CD4-positive, alpha-beta T cell (primary cell): ENCODE measurements at regions of chr1 and their contacts with region 1.

Region 1: DNA sequence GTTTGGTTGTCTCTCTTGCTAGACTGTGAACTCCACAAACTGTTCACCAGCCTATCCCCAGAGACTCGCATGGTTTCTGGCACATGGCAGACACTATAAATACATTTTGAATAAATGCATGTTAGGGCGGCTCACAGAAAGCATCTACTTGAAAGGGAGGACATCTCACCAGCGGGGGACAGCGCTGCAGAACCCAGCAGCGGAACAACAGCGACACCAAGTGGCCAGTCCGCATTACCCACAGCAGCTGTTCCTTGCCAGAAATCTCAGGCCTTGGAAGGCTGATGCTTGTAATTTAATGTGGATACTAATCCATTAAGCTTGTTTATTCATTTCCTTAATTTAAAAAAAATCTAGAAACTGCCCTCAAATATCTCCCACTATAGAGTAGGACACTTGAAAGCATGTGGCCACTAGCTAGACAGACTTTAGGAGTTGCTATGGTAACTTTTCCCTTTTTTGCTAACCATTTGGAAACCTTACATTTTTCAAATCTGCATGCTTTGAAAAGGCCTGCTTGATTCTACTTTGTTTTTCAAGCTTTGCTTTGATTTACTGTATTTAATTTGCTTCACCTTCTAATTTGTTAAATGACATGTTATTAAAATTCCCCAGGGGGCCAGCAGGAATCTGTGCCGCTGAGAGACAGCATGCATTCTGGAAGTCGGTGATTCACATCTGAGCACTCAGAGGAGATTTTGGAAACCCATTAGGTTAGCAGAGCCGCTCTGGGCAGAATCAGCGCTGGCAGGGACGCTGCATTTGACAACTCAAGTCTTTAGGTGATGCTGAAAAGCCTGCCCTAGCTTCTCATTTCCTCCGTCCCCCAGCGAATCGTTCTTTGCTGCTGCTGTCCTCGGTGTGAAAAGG is 63.5 kb upstream of the SSX2IP start:
- DNase-seq: peak; percentile 62 to 88 (median 73)
- ATAC-seq: peak; percentile 98
- H3K4me3 ChIP-seq: no peak overlapping the region
- H3K4me3 Mint-ChIP-seq: no peak overlapping the region
- H3K27ac ChIP-seq: no peak overlapping the region
- H3K27ac Mint-ChIP-seq: no peak overlapping the region
- H3K4me1 ChIP-seq: peaks cover 4% of the 10 kb centered on the region
- H3K4me1 Mint-ChIP-seq: peaks cover 3% of the 10 kb centered on the region
- H3K27me3 ChIP-seq: peaks cover 3 to 15% of the 10 kb centered on the region in 2 experiments
- H3K27me3 Mint-ChIP-seq: peaks cover 22% of the 10 kb centered on the region
- CTCF ChIP-seq: peak; percentile 97

Region 2: DNA sequence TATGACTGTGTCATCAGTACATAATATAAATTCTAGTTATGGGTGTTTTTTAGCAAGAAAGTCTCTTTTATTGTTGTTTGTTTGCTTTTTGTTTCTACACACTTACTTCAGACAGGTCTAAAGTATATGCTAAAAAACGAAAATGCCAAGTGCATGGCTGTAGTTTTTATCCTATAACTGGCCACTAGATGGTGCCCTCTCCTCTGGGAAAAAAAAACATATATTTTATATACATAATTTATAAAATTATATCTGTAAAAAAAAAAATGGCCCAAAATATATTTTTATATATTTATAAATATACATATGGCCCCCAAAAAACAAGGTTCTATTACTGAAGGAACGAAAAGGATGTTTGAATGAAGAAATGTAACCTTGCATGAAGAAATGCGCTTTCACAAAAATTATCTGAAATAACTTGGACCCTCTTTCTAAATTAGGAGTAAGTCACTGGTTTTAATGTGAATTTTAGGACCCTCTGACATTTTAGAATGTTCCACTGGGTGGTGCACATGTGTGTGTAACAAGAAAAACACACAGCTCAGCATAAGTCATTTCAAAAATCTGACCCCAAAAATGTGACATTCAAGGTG is 848.3 kb before region 1 on chr1:
- CTCF ChIA-PET with region 1: interaction called, 4 read pairs
- POLR2A ChIA-PET with region 1: no interaction called
- intact Hi-C with region 1: loop called (anchors 5 to 10 kb)
- DNase-seq: peak in 4 of 14 experiments; percentile 15 to 53 (median 46)
- ATAC-seq: peak; percentile 54
- H3K4me3 ChIP-seq: no peak overlapping the region
- H3K4me3 Mint-ChIP-seq: no peak overlapping the region
- H3K27ac ChIP-seq: no peak overlapping the region
- H3K27ac Mint-ChIP-seq: no peak overlapping the region
- H3K4me1 ChIP-seq: no peaks in the 10 kb centered on the region
- H3K4me1 Mint-ChIP-seq: no peaks in the 10 kb centered on the region
- H3K27me3 ChIP-seq: no peaks in the 10 kb centered on the region
- H3K27me3 Mint-ChIP-seq: peaks cover 18% of the 10 kb centered on the region
- CTCF ChIP-seq: peak; percentile 89

Region 3: GRCh38 chr1:83931658-83932253 is 822.0 kb before region 1 on chr1:
- CTCF ChIA-PET with region 1: interaction called, 4 read pairs
- POLR2A ChIA-PET with region 1: no interaction called
- intact Hi-C with region 1: loop called (anchors 5 kb)
- DNase-seq: peak in 5 of 14 experiments; percentile 1 to 64 (median 64)
- ATAC-seq: peak; percentile 76
- H3K4me3 ChIP-seq: no peak overlapping the region
- H3K4me3 Mint-ChIP-seq: no peak overlapping the region
- H3K27ac ChIP-seq: no peak overlapping the region
- H3K27ac Mint-ChIP-seq: no peak overlapping the region
- H3K4me1 ChIP-seq: no peaks in the 10 kb centered on the region
- H3K4me1 Mint-ChIP-seq: no peaks in the 10 kb centered on the region
- H3K27me3 ChIP-seq: no peaks in the 10 kb centered on the region
- H3K27me3 Mint-ChIP-seq: peaks cover 4% of the 10 kb centered on the region
- CTCF ChIP-seq: peak; percentile 73

Region 4: GRCh38 chr1:84442256-84442655 is 311.5 kb before region 1 on chr1:
- CTCF ChIA-PET with region 1: interaction called, 12 read pairs
- POLR2A ChIA-PET with region 1: no interaction called
- intact Hi-C with region 1: loop called (anchors 1 kb)
- DNase-seq: peak in 4 of 14 experiments; percentile 7 to 89 (median 86)
- ATAC-seq: peak; percentile 98
- H3K4me3 ChIP-seq: no peak overlapping the region
- H3K4me3 Mint-ChIP-seq: peak overlapping the region; percentile 5
- H3K27ac ChIP-seq: no peak overlapping the region
- H3K27ac Mint-ChIP-seq: peak overlapping the region; percentile 1
- H3K4me1 ChIP-seq: peaks cover 17% of the 10 kb centered on the region
- H3K4me1 Mint-ChIP-seq: peaks cover 11% of the 10 kb centered on the region
- H3K27me3 ChIP-seq: no peaks in the 10 kb centered on the region
- H3K27me3 Mint-ChIP-seq: peaks cover 15% of the 10 kb centered on the region
- CTCF ChIP-seq: peak; percentile 69

Region 5: DNA sequence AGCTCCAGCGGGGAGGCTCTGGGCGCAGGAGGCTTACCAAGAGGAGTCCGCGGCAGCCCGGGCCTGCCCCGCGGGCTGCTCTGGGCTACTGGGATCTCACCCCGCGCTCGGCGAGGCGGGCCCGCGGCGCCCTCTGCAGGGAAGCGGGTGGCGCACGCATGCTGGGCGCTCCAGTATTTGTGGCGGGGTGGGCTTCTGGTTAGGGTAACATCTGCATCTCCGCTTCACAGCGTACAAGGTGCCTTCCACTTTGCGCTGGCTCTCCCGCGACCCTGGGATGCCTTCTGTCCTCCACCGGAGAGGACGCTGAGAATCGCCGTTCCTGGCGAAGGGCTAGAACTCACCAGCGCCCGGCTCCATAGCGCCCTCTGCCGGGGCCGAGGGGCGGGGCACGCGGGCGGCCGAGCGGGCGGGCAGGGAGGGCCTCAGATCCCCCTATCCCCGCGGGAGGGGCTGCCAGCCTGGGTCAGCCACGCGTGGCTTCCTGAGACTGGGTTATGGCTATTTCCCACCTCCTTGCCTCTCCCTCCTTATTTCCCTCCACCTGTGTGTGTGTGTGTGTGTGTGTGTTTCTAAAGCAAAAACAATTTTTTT is 132.9 kb before region 1 on chr1:
- CTCF ChIA-PET with region 1: no interaction called
- POLR2A ChIA-PET with region 1: no interaction called
- intact Hi-C with region 1: loop called (anchors 1 to 2 kb)
- DNase-seq: peak; percentile 50 to 88 (median 74)
- ATAC-seq: peak; percentile 92
- H3K4me3 ChIP-seq: peak overlapping the region; percentile 64
- H3K4me3 Mint-ChIP-seq: peak overlapping the region; percentile 95
- H3K27ac ChIP-seq: no peak overlapping the region
- H3K27ac Mint-ChIP-seq: no peak overlapping the region
- H3K4me1 ChIP-seq: peaks cover 8% of the 10 kb centered on the region
- H3K4me1 Mint-ChIP-seq: peaks cover 12% of the 10 kb centered on the region
- H3K27me3 ChIP-seq: no peaks in the 10 kb centered on the region
- H3K27me3 Mint-ChIP-seq: no peaks in the 10 kb centered on the region
- CTCF ChIP-seq: peak; percentile 100

Region 6: DNA sequence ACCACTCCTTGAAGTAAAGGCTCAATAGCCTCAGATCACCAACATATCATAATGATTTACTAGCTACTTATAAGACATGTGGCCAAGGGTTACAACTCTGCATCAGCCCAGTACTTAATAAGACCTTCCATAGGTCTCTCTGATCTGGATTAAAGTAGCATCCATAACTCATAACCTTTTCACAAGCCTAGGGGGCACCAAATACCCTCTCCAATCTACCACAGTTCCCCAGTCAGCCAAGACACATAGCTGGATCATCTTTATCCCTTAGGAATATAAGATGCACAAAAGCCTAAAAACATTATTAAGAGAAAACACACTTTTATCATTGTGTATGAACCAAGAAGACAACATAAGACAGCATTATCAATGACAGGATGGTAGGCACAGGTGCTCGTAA is 85.6 kb before region 1 on chr1:
- CTCF ChIA-PET with region 1: interaction called, 3 read pairs
- POLR2A ChIA-PET with region 1: no interaction called
- intact Hi-C with region 1: loop called (anchors 1 to 5 kb)
- DNase-seq: peak in 4 of 14 experiments; percentile 20 to 41 (median 34)
- ATAC-seq: peak; percentile 37
- H3K4me3 ChIP-seq: no peak overlapping the region
- H3K4me3 Mint-ChIP-seq: no peak overlapping the region
- H3K27ac ChIP-seq: no peak overlapping the region
- H3K27ac Mint-ChIP-seq: no peak overlapping the region
- H3K4me1 ChIP-seq: no peaks in the 10 kb centered on the region
- H3K4me1 Mint-ChIP-seq: peaks cover 3% of the 10 kb centered on the region
- H3K27me3 ChIP-seq: no peaks in the 10 kb centered on the region
- H3K27me3 Mint-ChIP-seq: no peaks in the 10 kb centered on the region
- CTCF ChIP-seq: peak; percentile 22

Region 7: GRCh38 chr1:84823511-84823910 is 69.8 kb after region 1 on chr1:
- CTCF ChIA-PET with region 1: no interaction called
- POLR2A ChIA-PET with region 1: no interaction called
- intact Hi-C with region 1: no loop called
- DNase-seq: no peak
- ATAC-seq: no peak
- H3K4me3 ChIP-seq: no peak overlapping the region
- H3K4me3 Mint-ChIP-seq: no peak overlapping the region
- H3K27ac ChIP-seq: no peak overlapping the region
- H3K27ac Mint-ChIP-seq: no peak overlapping the region
- H3K4me1 ChIP-seq: no peaks in the 10 kb centered on the region
- H3K4me1 Mint-ChIP-seq: peaks cover 15% of the 10 kb centered on the region
- H3K27me3 ChIP-seq: no peaks in the 10 kb centered on the region
- H3K27me3 Mint-ChIP-seq: no peaks in the 10 kb centered on the region
- CTCF ChIP-seq: no peak